ENCODE measurements at regions of chr9 and their contacts with region 1.

Region 1: GRCh38 chr9:81689343-81690190 is at the start of gene TLE1:
- DNase-seq: peak; percentile 100
- ATAC-seq: peak; percentile 90
- H3K4me3 ChIP-seq: peak within 1 kb of the TSS; percentile 98
- H3K27ac ChIP-seq: peak within 1 kb of the TSS; percentile 87
- H3K4me1 ChIP-seq: peaks cover 10% of the 10 kb centered on the region
- H3K27me3 ChIP-seq: no peaks in the 10 kb centered on the region
- CTCF ChIP-seq: no peak
- POLR2A ChIP-seq: peak; percentile 59
- RAD21 ChIP-seq: peak; percentile 36
- total RNA-seq, gene TLE1: 36.0 and 40.3 TPM in 2 replicates

Region 2: GRCh38 chr9:80175286-80176150 is 1514.0 kb before region 1 on chr9:
- CTCF ChIA-PET with region 1: no interaction called
- POLR2A ChIA-PET with region 1: no interaction called
- dilution Hi-C with region 1: no loop called
- in situ Hi-C with region 1: no loop called
- intact Hi-C with region 1: loop called (anchors 5 kb)
- DNase-seq: peak; percentile 64
- ATAC-seq: peak; percentile 66
- H3K4me3 ChIP-seq: no peak overlapping the region
- H3K27ac ChIP-seq: no peak overlapping the region
- H3K4me1 ChIP-seq: no peaks in the 10 kb centered on the region
- H3K27me3 ChIP-seq: no peaks in the 10 kb centered on the region
- CTCF ChIP-seq: peak; percentile 75
- POLR2A ChIP-seq: no peak
- RAD21 ChIP-seq: peak; percentile 78

Region 3: DNA sequence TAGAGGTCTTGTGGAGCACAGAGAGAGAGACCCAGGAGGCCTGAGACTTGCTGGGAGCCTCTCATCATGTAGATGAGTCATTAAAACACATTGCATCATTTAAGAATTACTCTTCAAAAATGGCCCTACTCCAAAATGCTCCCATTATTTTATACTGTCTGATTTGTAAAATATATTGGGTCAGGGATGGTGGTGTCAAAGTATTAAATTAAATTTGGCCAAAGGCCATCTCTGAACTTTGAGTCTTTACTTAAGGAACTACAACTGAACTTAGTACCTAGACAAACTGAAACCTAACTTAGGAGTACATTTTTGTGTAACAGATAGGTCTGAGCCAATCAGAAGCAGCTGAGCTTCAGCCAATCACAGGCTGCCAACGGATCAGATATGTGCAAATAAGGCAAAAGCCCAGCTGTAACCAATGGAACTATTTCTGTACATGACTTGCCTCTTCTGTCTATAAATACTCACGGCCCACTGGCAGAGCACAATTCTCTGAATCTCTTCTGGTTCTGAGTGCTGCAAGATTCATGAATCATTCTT is 657.5 kb before region 1 on chr9:
- CTCF ChIA-PET with region 1: no interaction called
- POLR2A ChIA-PET with region 1: no interaction called
- dilution Hi-C with region 1: no loop called
- in situ Hi-C with region 1: no loop called
- intact Hi-C with region 1: loop called (anchors 10 kb)
- DNase-seq: peak; percentile 89
- ATAC-seq: peak; percentile 54
- H3K4me3 ChIP-seq: no peak overlapping the region
- H3K27ac ChIP-seq: no peak overlapping the region
- H3K4me1 ChIP-seq: peaks cover 11% of the 10 kb centered on the region
- H3K27me3 ChIP-seq: no peaks in the 10 kb centered on the region
- CTCF ChIP-seq: no peak
- POLR2A ChIP-seq: no peak
- RAD21 ChIP-seq: no peak

Region 4: DNA sequence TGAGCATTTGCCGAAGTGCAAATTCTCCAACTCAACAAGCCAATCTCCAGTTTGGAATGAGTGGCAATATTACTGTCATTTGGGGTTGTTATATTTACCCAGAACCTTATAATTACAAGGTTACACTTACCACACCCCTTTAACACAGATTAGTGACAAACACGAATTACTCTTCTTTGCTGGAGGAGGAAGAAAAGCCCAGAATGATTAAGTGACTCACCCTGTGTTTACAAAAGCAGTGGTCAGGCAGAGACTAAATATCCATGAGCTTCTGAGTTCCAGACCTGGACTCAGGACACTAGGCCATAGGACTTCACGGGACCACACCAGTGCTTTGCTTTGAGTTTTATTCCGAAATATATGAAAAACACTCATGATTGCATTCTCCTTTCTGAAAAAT is 371.0 kb before region 1 on chr9:
- CTCF ChIA-PET with region 1: no interaction called
- POLR2A ChIA-PET with region 1: no interaction called
- dilution Hi-C with region 1: no loop called
- in situ Hi-C with region 1: no loop called
- intact Hi-C with region 1: loop called (anchors 5 kb)
- DNase-seq: peak; percentile 72
- ATAC-seq: peak; percentile 76
- H3K4me3 ChIP-seq: no peak overlapping the region
- H3K27ac ChIP-seq: no peak overlapping the region
- H3K4me1 ChIP-seq: peaks cover 3% of the 10 kb centered on the region; the same call in 1 of the 2 replicates
- H3K27me3 ChIP-seq: no peaks in the 10 kb centered on the region
- CTCF ChIP-seq: no peak
- POLR2A ChIP-seq: no peak
- RAD21 ChIP-seq: no peak; the same call in 1 of the 2 replicates

Region 5: DNA sequence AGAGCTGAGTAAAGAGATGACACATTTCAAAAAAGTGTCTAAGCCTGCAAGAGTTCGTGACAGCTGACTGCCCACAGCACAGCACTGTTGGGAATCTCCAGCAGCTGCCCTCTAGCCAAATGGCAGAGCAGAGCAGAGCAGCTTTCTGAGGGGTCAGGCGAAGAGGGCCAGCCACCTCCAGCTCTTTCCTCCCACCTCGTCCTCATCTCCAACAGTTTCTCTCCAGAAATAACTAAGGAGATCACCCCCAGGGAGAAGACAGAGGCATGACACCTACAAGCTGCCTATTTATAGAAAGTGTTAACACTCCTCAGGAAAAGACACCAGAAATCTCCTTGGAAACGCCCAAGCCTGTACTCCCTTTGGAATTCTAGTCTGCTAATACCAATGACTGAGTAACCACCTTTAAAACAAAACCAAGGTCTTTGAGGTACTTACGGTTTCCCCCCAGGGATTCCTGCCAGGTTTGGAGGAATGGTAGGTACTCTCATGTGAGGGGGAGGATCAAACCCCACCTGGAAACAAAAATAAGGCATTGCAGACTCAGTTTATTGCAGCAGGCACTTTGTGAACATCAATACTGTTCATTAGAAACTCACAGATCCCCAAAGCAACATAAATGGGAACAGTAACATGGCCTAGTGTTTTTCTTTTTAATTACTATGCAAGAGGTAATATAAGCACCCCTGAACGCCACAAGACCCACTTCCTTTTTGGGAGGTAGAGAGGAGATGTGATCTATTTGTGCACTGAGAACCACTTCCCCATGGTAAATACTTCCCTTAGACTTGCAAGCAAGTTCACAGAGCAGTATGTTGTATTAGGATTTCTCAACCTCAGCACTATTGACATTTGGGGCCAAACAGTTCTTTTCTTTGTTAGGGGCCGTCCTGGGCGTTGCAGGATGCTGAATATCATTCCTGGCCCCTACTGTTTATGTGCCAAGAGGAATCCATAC is 79.5 kb before region 1 on chr9:
- CTCF ChIA-PET with region 1: no interaction called
- POLR2A ChIA-PET with region 1: interaction called, 3 read pairs
- dilution Hi-C with region 1: no loop called
- in situ Hi-C with region 1: no loop called
- intact Hi-C with region 1: loop called (anchors 5 kb)
- DNase-seq: peak; percentile 40
- ATAC-seq: peak; percentile 19; the same call in 1 of the 2 replicates
- H3K4me3 ChIP-seq: no peak overlapping the region
- H3K27ac ChIP-seq: no peak overlapping the region
- H3K4me1 ChIP-seq: peaks cover 16% of the 10 kb centered on the region
- H3K27me3 ChIP-seq: no peaks in the 10 kb centered on the region
- CTCF ChIP-seq: no peak
- POLR2A ChIP-seq: no peak
- RAD21 ChIP-seq: no peak

Region 6: DNA sequence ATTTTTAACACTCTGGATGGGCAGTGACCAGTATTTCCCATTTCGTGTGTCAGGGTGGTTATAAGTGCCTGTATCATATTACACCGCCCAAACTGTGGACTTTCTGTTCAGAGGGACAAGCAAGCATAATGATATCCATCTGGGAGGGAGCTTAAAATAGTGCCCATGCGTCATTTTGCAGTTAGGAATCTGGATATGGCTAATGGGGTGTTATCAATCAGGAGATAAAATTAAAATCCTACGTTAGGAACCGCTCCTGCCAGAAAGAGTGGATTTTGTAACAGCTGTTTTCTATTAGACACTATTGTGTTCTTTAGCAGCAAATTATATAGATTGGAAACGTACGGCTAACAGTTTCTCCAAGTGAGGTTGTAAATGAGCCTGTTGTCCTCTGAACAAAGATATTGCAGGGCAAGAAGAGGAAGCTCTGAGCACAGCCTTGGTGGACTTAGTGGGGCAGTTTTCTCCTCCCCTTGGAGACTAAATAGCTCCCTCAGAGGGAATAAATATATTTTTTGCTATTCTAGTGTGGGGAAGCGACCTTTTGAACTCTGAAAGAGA is 459.4 kb after region 1 on chr9:
- CTCF ChIA-PET with region 1: no interaction called
- POLR2A ChIA-PET with region 1: no interaction called
- dilution Hi-C with region 1: no loop called
- in situ Hi-C with region 1: no loop called
- intact Hi-C with region 1: no loop called
- DNase-seq: peak; percentile 89
- ATAC-seq: peak; percentile 76
- H3K4me3 ChIP-seq: no peak overlapping the region
- H3K27ac ChIP-seq: no peak overlapping the region
- H3K4me1 ChIP-seq: peaks cover 6% of the 10 kb centered on the region
- H3K27me3 ChIP-seq: no peaks in the 10 kb centered on the region
- CTCF ChIP-seq: no peak
- POLR2A ChIP-seq: no peak
- RAD21 ChIP-seq: no peak

Region 7: GRCh38 chr9:82271106-82271561 is 581.6 kb after region 1 on chr9:
- CTCF ChIA-PET with region 1: no interaction called
- POLR2A ChIA-PET with region 1: no interaction called
- dilution Hi-C with region 1: no loop called
- in situ Hi-C with region 1: no loop called
- intact Hi-C with region 1: loop called (anchors 10 kb)
- DNase-seq: peak; percentile 95
- ATAC-seq: peak; percentile 71
- H3K4me3 ChIP-seq: no peak overlapping the region
- H3K27ac ChIP-seq: no peak overlapping the region
- H3K4me1 ChIP-seq: peaks cover 8% of the 10 kb centered on the region
- H3K27me3 ChIP-seq: no peaks in the 10 kb centered on the region
- CTCF ChIP-seq: no peak
- POLR2A ChIP-seq: no peak
- RAD21 ChIP-seq: 0 out of 2 replicates have a peak, but pooled peaks have one; percentile 8